Tibial artery (tissue), 4 donors: ENCODE measurements at regions of chr14 and their contacts with region 1.

Region 1: GRCh38 chr14:104826189-104826860 is 25.4 kb downstream of the ZBTB42 start:
- DNase-seq: peak; percentile 84 to 92
- H3K4me3 ChIP-seq: peak overlapping the region; percentile 51 to 63
- H3K27ac ChIP-seq: peak overlapping the region; percentile 42 to 64
- H3K4me1 ChIP-seq: peaks cover 0 to 23% (median 20%) of the 10 kb centered on the region in 4 donors
- H3K27me3 ChIP-seq: no peaks in the 10 kb centered on the region
- CTCF ChIP-seq: peak; percentile 81 to 83

Region 2: GRCh38 chr14:104650057-104650981 is 176.0 kb before region 1 on chr14:
- intact Hi-C with region 1: loop called (anchors 10 kb)
- DNase-seq: peak; percentile 51 to 83
- H3K4me3 ChIP-seq: peak overlapping the region; percentile 31 to 51
- H3K27ac ChIP-seq: no peak overlapping the region
- H3K4me1 ChIP-seq: peaks cover 0 to 11% (median 7%) of the 10 kb centered on the region in 4 donors
- H3K27me3 ChIP-seq: peaks cover 0 to 18% of the 10 kb centered on the region in 2 donors
- CTCF ChIP-seq: peak; percentile 91 to 100

Region 3: GRCh38 chr14:104768437-104769323 is 57.6 kb before region 1 on chr14:
- intact Hi-C with region 1: loop called (anchors 2 kb)
- DNase-seq: peak; percentile 87 to 94
- H3K4me3 ChIP-seq: no peak overlapping the region
- H3K27ac ChIP-seq: peak overlapping the region; percentile 36 to 44
- H3K4me1 ChIP-seq: peaks cover 0 to 12% (median 7%) of the 10 kb centered on the region in 4 donors
- H3K27me3 ChIP-seq: no peaks in the 10 kb centered on the region
- CTCF ChIP-seq: peak; percentile 82 to 95

Region 4: GRCh38 chr14:104882325-104883115 is 56.2 kb after region 1 on chr14:
- intact Hi-C with region 1: no loop called
- DNase-seq: no peak
- H3K4me3 ChIP-seq: no peak overlapping the region
- H3K27ac ChIP-seq: no peak overlapping the region
- H3K4me1 ChIP-seq: peaks cover 0 to 4% (median 0%) of the 10 kb centered on the region in 4 donors
- H3K27me3 ChIP-seq: no peaks in the 10 kb centered on the region
- CTCF ChIP-seq: no peak